ENCODE measurements at regions of chr12 and their contacts with region 1.

Region 1: GRCh38 chr12:76586764-76587395 is 27.3 kb upstream of the OSBPL8 start:
- DNase-seq: peak; percentile 16
- H3K4me3 ChIP-seq: no peak overlapping the region
- CTCF ChIP-seq: peak; percentile 46

Region 2: DNA sequence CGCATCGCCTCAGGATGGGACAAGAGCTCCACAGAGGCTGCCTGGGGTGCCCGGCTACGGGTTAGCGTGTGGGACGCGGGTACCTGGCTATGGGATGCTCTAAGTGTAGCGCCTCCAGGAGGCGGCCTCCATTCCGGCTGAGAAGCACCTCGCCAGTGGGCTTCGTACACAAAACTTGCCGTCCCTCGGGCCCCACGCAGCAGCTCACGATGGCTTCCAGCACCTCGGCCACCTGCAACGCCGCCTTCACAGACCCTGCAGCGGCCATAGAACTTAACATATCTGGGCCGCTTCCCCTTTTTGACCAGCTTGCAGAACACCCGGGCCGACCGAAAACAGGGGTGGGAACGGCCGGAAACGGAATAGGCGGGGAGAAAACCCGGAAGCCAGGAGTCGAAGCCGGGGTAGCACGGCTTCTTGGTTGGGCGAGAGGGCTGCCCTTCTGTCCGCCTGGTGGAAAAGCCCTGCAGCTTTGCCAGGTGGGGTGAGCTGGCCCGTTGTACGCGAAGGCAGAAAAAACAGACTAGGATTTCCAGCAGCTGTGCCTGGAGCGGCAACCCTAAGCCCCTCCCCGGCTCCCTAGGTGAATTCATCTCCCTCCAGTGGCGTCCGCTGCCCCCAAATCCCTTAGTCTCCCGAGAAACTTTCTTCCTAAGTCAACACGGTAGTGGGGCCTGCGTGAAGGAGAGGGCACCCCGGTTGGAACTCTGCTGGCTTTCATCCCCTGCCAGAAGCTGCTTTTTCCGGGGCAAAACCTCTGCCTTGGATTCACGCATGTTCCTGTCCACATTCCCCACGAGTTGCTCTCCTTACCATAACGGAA is 238.6 kb before region 1 on chr12 and contains the start of gene BBS10:
- CTCF ChIA-PET with region 1: interaction called, 27 read pairs
- POLR2A ChIA-PET with region 1: interaction called, 3 read pairs
- DNase-seq: peak; percentile 31
- H3K4me3 ChIP-seq: peak within 1 kb of the TSS; percentile 84
- CTCF ChIP-seq: peak; percentile 59

Region 3: GRCh38 chr12:76422543-76423438 is 164.1 kb before region 1 on chr12:
- CTCF ChIA-PET with region 1: interaction called, 13 read pairs
- POLR2A ChIA-PET with region 1: no interaction called
- DNase-seq: peak; percentile 16
- H3K4me3 ChIP-seq: peak overlapping the region; percentile 39
- CTCF ChIP-seq: no peak

Region 4: DNA sequence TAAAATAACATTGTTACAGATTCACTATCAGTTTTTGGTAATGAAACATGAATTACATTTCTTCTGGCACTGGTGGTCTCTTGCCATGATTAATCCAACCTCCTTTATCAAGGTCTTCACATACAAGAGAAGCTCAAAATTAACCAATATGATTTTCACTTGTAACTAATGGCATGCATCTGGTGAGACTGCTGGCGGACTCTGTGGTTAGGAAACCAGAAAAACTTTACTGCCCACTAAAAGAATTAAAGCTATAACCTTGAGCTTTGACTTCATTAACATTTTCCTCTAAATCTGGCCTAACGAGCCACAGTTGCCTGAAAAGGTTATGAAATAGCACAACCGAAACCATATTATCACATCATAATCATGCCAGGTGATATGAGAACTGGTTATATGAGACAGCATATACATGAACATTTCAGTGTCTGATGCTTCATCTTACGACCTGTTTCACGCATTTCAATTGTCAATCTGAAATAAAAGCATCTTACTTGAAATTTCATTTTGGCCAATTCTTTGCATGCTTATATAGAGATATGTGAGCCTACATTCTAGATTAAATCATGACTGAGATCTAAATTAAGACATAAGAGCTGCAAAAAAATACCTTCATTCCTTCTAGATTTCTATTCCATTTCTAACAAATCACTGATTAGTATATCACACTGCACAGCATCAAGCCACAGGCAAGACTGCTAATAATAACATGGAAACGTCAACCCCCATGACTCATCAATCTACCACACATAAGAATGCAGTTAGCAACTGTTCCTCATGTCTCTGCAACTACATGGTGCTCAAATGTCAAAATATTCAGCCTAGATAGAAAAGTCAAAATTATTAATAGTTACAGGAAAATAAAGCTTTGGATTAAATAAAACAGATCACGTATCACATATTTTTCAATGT is 116.6 kb before region 1 on chr12:
- CTCF ChIA-PET with region 1: interaction called, 10 read pairs
- POLR2A ChIA-PET with region 1: no interaction called
- DNase-seq: peak; percentile 84
- H3K4me3 ChIP-seq: no peak overlapping the region
- CTCF ChIP-seq: no peak

Region 5: DNA sequence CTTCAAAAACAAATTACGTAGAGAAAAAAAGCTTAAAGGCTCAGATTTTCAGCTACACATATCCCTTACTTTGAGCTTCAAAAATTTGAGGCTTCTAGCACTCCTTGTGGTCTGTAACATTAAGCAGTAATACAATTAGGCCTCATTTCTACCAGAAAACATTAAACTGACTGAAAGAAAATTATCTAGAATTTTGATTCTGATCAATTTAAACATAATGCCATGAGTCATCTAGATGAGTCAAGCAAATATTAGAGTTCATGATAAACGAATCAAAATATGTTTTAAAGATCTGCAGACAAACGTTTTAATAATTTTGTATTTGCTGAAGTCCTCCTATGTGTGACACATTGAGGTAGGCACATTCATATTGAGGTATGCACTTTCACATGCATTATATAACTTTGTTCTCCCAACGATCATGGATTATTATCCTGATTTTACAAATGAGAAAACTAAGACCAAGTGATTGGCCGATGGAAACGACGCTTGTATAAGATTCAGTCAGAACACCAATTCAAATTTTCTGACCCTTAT is 31.6 kb before region 1 on chr12:
- CTCF ChIA-PET with region 1: interaction called, 10 read pairs
- POLR2A ChIA-PET with region 1: interaction called, 3 read pairs
- DNase-seq: no peak
- H3K4me3 ChIP-seq: no peak overlapping the region
- CTCF ChIP-seq: no peak

Region 6: GRCh38 chr12:76569685-76570604 is 16.9 kb before region 1 on chr12:
- CTCF ChIA-PET with region 1: interaction called, 11 read pairs
- POLR2A ChIA-PET with region 1: interaction called, 3 read pairs
- DNase-seq: no peak
- H3K4me3 ChIP-seq: no peak overlapping the region
- CTCF ChIP-seq: no peak

Region 7: DNA sequence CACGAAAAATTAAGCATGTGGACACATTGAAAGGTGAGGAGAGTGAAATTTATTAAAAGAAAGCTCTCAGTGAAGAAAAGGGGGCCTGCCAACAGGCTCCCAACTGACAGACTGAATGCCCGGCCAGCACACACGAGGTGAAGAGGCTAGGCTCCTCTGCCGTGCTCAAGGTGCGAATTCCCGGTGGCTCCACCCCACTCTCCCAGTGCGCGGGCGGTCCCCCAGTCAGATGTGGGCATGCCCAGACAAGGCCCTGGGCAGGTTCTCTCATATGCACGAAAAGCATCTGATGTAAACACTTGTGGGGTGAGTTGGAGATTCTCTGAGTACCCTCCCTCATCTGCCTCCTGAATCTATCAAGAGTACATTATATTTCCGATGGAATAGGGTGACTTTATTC is 21.2 kb after region 1 on chr12:
- CTCF ChIA-PET with region 1: interaction called, 31 read pairs
- POLR2A ChIA-PET with region 1: interaction called, 3 read pairs
- DNase-seq: no peak
- H3K4me3 ChIP-seq: no peak overlapping the region
- CTCF ChIP-seq: no peak

Region 8: DNA sequence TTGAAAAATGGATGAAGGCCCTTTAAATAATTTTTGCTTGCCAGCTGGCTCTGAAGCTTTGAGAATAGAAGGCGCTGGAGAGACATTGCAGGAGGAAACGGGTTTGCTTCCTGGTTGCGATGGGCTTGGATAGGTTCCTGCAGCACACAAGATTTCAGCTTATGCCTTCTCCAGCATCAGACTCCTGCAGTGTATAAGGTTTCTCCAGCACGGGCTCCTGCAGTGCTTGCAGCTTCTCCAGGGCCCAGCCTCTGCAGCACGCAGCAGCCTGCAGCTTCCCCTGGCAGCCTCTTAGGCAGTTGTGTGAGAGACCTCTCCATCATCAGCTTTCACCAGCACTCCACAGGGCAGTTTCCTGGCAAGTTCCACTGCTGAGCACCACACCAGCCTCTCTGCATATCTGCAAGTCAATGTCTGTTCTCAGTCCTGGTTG is 98.4 kb after region 1 on chr12:
- CTCF ChIA-PET with region 1: no interaction called
- POLR2A ChIA-PET with region 1: no interaction called
- DNase-seq: no peak
- H3K4me3 ChIP-seq: no peak overlapping the region
- CTCF ChIP-seq: no peak

Region 9: DNA sequence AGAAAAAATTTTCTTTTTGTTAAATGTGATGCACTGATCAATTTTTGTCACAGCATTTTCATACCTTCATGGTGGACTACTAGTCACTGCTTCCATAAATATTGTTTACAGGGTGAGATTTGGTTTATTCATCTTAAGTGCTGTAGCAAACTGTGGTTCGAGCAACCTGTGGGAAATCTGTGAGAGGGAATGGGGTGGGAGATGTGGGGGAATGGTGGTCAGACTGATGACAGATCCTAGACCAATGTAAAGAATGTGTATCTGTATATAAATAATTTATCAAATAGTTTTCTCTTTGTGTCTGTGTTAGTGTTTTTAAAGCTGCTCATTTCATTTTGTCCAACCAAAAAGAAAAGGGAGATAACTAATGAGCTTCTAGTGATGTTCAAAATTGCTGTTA is 265.2 kb after region 1 on chr12:
- CTCF ChIA-PET with region 1: no interaction called
- POLR2A ChIA-PET with region 1: no interaction called
- DNase-seq: no peak
- H3K4me3 ChIP-seq: no peak overlapping the region
- CTCF ChIP-seq: no peak